Activated CD4-positive, alpha-beta T cell treated with anti-CD3 and anti-CD28 coated beads for 36 hours (primary cell): ENCODE measurements at regions of chr3 and their contacts with region 1.

Region 1: GRCh38 chr3:125585595-125586223 is 9.6 kb downstream of the OSBPL11 start:
- DNase-seq: peak; percentile 70
- ATAC-seq: peak; percentile 54
- H3K4me3 Mint-ChIP-seq: no peak overlapping the region
- H3K27ac Mint-ChIP-seq: no peak overlapping the region
- H3K4me1 Mint-ChIP-seq: peaks cover 18% of the 10 kb centered on the region
- H3K27me3 Mint-ChIP-seq: no peaks in the 10 kb centered on the region

Region 2: GRCh38 chr3:124928333-124929202 is 657.1 kb before region 1 on chr3:
- CTCF ChIA-PET with region 1: interaction called, 5 read pairs
- POLR2A ChIA-PET with region 1: no interaction called
- intact Hi-C with region 1: loop called (anchors 1 to 10 kb)
- DNase-seq: peak; percentile 79
- ATAC-seq: no peak
- H3K4me3 Mint-ChIP-seq: no peak overlapping the region
- H3K27ac Mint-ChIP-seq: no peak overlapping the region
- H3K4me1 Mint-ChIP-seq: no peaks in the 10 kb centered on the region
- H3K27me3 Mint-ChIP-seq: peaks cover 8% of the 10 kb centered on the region

Region 3: GRCh38 chr3:125150525-125151441 is 434.9 kb before region 1 on chr3:
- CTCF ChIA-PET with region 1: interaction called, 7 read pairs
- POLR2A ChIA-PET with region 1: no interaction called
- intact Hi-C with region 1: loop called in 1 of 2 experiments (anchors 2 kb)
- DNase-seq: peak; percentile 81
- ATAC-seq: peak; percentile 95
- H3K4me3 Mint-ChIP-seq: no peak overlapping the region
- H3K27ac Mint-ChIP-seq: no peak overlapping the region
- H3K4me1 Mint-ChIP-seq: peaks cover 8% of the 10 kb centered on the region
- H3K27me3 Mint-ChIP-seq: peaks cover 13% of the 10 kb centered on the region

Region 4: DNA sequence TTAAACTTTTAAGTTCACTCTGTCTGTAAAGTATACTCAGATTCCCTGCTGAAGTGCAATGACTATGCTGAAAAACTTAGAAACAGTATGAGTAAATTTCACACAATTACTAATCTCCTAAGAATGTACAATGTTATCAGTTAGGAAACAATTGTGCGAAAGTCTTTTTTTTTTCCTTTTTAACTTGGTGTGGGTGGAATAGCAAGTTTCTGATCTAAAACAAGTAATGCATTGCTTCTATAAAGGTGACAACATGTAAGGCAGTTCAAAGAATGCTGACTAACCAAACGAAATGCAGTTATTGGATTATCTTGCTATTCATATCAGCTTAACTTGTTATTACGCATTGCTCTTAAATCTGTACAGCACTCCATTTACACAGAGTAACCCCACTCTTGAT is 353.8 kb before region 1 on chr3:
- CTCF ChIA-PET with region 1: interaction called, 3 read pairs
- POLR2A ChIA-PET with region 1: no interaction called
- intact Hi-C with region 1: loop called (anchors 10 kb)
- DNase-seq: no peak
- ATAC-seq: peak; percentile 92
- H3K4me3 Mint-ChIP-seq: no peak overlapping the region
- H3K27ac Mint-ChIP-seq: peak overlapping the region; percentile 82
- H3K4me1 Mint-ChIP-seq: peaks cover 22% of the 10 kb centered on the region
- H3K27me3 Mint-ChIP-seq: no peaks in the 10 kb centered on the region

Region 5: GRCh38 chr3:125519678-125520589 is 65.8 kb before region 1 on chr3 and contains the start of gene SNX4:
- CTCF ChIA-PET with region 1: interaction called, 12 read pairs
- POLR2A ChIA-PET with region 1: interaction called, 3 read pairs
- intact Hi-C with region 1: loop called in 1 of 2 experiments (anchors 2 kb)
- DNase-seq: peak; percentile 93
- ATAC-seq: peak; percentile 99
- H3K4me3 Mint-ChIP-seq: peak within 1 kb of the TSS; percentile 85
- H3K27ac Mint-ChIP-seq: peak within 1 kb of the TSS; percentile 93
- H3K4me1 Mint-ChIP-seq: peaks cover 37% of the 10 kb centered on the region
- H3K27me3 Mint-ChIP-seq: no peaks in the 10 kb centered on the region
- total RNA-seq, gene SNX4: 36.2 to 36.3 TPM